Activated CD8-positive, alpha-beta T cell treated with anti-CD3 and anti-CD28 coated beads, Interleukin-2, amount 10 ng/mL, durations not matched to agents 7 days and 5 days (primary cell): ENCODE measurements at regions of chr6 and their contacts with region 1.

Region 1: DNA sequence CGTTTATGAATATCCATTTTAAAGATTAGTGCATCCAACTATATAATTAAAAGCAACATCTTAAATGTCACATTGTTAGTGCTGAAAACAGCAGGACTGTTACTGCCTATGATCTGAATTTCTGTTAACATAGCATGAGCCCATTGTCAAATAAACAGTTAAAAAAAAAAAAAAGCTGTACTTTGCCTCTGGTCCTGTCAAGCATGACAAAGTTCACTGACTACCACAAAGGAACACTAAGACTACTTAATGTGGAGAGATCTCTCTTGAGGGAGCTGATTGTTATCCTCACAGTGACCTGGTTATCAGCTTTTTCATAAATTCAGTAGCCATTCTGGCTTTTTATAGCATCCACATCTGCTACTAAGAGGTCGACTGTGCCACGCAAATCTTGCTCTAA is 228.1 kb downstream of the TMEM200A start:
- DNase-seq: no peak
- ATAC-seq: no peak
- H3K4me3 Mint-ChIP-seq: no peak overlapping the region
- H3K27ac Mint-ChIP-seq: no peak overlapping the region
- H3K4me1 Mint-ChIP-seq: no peaks in the 10 kb centered on the region
- H3K27me3 Mint-ChIP-seq: no peaks in the 10 kb centered on the region

Region 2: DNA sequence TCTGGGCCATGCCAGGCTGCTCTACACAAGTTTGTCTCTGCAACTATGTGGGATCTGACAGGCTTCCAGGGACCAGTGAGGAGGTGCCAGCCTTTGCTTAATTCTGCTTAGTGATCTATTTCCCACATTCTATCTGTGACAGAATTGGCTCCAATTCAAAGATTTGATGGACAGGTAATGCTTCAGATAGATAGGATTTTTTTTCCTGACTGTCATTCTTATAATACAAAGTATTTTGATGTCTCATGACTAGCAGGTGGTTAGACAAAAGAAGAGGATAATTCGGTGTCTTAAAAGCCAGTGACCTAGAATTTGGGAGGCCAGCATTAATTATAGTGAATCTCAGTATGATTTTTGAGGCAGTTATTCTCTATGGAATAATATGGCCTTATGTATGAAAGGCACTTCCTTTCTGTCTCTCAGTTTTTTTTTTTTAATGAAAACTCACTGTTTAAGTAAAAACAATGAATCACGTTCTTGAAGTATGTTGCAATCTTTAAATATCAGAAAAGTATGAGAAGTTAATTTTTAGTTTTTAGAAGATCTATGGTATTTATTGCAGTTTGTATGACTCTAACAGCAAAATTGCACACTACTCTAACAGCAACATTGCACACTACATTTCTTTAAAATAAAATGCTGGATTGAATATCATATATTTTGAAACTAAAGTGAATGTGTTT is 184.4 kb before region 1 on chr6:
- CTCF ChIA-PET with region 1: no interaction called
- POLR2A ChIA-PET with region 1: no interaction called
- DNase-seq: no peak
- ATAC-seq: no peak
- H3K4me3 Mint-ChIP-seq: no peak overlapping the region
- H3K27ac Mint-ChIP-seq: no peak overlapping the region
- H3K4me1 Mint-ChIP-seq: no peaks in the 10 kb centered on the region
- H3K27me3 Mint-ChIP-seq: peaks cover 4% of the 10 kb centered on the region

Region 3: GRCh38 chr6:130604841-130605399 is 11.0 kb after region 1 on chr6:
- CTCF ChIA-PET with region 1: interaction called, 3 read pairs
- POLR2A ChIA-PET with region 1: interaction called, 10 read pairs
- DNase-seq: no peak
- ATAC-seq: no peak
- H3K4me3 Mint-ChIP-seq: no peak overlapping the region
- H3K27ac Mint-ChIP-seq: no peak overlapping the region
- H3K4me1 Mint-ChIP-seq: no peaks in the 10 kb centered on the region
- H3K27me3 Mint-ChIP-seq: no peaks in the 10 kb centered on the region